Caco-2 (cell line): ENCODE measurements at regions of chr12 and their contacts with region 1.

Region 1: DNA sequence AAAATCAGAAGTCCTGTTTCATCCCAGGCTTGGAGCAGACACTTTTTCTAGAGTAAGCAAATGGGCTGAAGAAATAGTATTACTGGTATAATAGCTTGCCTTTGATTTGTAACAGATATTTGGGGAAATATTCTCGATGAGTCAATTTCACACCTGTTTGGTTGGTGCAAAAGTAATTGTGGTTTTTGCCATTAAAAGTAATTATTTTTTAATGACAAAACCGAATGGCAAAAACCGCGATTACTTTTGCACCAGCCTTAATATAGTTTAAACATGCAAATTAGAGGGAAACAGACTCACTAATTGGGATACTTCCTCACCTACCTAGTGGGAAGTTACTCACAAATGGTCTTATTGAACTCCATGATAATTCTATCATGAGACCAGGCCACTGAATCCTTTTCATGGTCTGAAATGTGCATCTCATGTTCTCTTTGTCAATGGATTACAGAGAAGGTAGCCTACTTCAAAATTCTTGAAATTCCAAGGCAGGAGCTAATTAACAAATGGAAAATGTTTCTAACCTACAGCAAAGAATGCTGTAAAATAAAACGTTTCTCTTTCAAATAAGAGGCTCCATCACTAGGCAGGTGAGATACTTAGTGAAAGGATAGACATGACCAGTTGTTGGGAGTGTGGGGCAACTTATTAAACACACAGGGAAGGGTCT is 391.3 kb downstream of the EMP1 start:
- DNase-seq: no peak
- H3K4me3 ChIP-seq: no peak overlapping the region
- H3K4me3 Mint-ChIP-seq: no peak overlapping the region
- H3K27ac Mint-ChIP-seq: no peak overlapping the region
- H3K4me1 ChIP-seq: peaks cover 8% of the 10 kb centered on the region
- H3K4me1 Mint-ChIP-seq: peaks cover 7% of the 10 kb centered on the region
- H3K27me3 ChIP-seq: no peaks in the 10 kb centered on the region
- H3K27me3 Mint-ChIP-seq: no peaks in the 10 kb centered on the region
- CTCF ChIP-seq: no peak

Region 2: DNA sequence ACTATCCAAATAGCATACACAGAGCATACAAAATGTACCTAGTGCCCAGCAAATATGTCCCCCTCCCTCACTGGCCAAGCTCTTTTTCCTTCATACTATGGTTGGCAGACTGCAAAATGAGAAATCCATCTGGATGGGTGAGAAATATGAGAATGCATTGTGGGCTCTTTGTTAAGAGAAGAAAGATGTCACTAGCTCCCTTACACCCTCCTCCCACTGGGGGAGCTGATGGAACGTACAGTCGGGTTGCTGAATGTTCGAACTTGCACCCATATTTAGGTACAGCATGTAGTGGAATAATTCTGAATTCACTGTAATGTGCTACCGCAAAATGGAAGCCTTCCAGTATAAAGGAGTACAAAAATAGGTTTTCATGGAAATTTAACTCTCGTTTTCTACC is 16.1 kb after region 1 on chr12:
- CTCF ChIA-PET with region 1: no interaction called
- POLR2A ChIA-PET with region 1: no interaction called
- intact Hi-C with region 1: loop called (anchors 2 kb)
- DNase-seq: no peak
- H3K4me3 ChIP-seq: no peak overlapping the region
- H3K4me3 Mint-ChIP-seq: no peak overlapping the region
- H3K27ac Mint-ChIP-seq: no peak overlapping the region
- H3K4me1 ChIP-seq: no peaks in the 10 kb centered on the region
- H3K4me1 Mint-ChIP-seq: no peaks in the 10 kb centered on the region
- H3K27me3 ChIP-seq: no peaks in the 10 kb centered on the region
- H3K27me3 Mint-ChIP-seq: no peaks in the 10 kb centered on the region
- CTCF ChIP-seq: no peak

Region 3: GRCh38 chr12:13734584-13735152 is 146.8 kb after region 1 on chr12:
- CTCF ChIA-PET with region 1: no interaction called
- POLR2A ChIA-PET with region 1: no interaction called
- intact Hi-C with region 1: no loop called
- DNase-seq: no peak
- H3K4me3 ChIP-seq: no peak overlapping the region
- H3K4me3 Mint-ChIP-seq: no peak overlapping the region
- H3K27ac Mint-ChIP-seq: no peak overlapping the region
- H3K4me1 ChIP-seq: 0 out of 2 replicates have a peak, but pooled peaks cover under 1% of the 10 kb centered on the region
- H3K4me1 Mint-ChIP-seq: peaks cover 3% of the 10 kb centered on the region
- H3K27me3 ChIP-seq: no peaks in the 10 kb centered on the region
- H3K27me3 Mint-ChIP-seq: no peaks in the 10 kb centered on the region
- CTCF ChIP-seq: no peak